Activated CD8-positive, alpha-beta T cell treated with anti-CD3 and anti-CD28 coated beads for 36 hours (primary cell): ENCODE measurements at regions of chr19 and their contacts with region 1.

Region 1: DNA sequence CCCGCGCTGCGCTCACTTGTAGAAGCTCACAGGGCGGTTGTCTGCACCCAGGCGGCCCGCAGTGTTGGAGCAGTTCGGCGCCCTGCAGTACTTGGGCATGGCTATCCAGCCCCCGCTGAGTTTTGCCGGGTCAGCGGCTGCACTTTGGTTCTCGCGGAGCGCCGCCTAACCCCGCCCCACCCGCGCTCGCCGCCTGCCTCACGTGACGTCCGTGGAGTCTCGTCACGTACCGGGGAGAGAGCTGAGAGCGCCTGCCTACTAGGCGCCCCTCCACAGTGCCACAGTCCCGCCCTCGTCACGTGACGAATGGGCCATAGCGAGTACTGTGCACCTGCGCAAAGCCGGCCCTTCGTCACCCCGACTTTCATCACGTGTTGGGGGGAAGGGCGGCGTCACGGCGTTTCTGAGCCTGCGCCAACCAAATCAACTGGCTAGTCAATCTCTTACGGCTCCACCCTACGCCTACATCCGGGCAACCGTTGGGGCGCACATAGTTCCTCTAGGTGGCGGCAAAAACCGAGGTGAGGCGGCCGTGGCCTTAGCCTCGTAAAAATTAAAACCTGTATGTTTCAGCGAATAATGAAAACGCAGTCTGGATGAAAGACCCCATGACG is at the start of gene THAP8:
- DNase-seq: peak; percentile 100
- ATAC-seq: peak; percentile 89
- H3K4me3 Mint-ChIP-seq: peak within 1 kb of the TSS; percentile 89
- H3K27ac Mint-ChIP-seq: peak within 1 kb of the TSS; percentile 98
- H3K4me1 Mint-ChIP-seq: peaks cover 11% of the 10 kb centered on the region
- H3K27me3 Mint-ChIP-seq: no peaks in the 10 kb centered on the region
- CTCF ChIP-seq: peak; percentile 45
- total RNA-seq, gene THAP8: 3.4 to 3.7 TPM

Region 2: GRCh38 chr19:36003284-36003683 is 50.9 kb before region 1 on chr19:
- CTCF ChIA-PET with region 1: no interaction called
- POLR2A ChIA-PET with region 1: no interaction called
- intact Hi-C with region 1: no loop called
- DNase-seq: no peak
- ATAC-seq: no peak
- H3K4me3 Mint-ChIP-seq: no peak overlapping the region
- H3K27ac Mint-ChIP-seq: no peak overlapping the region
- H3K4me1 Mint-ChIP-seq: peaks cover 15% of the 10 kb centered on the region
- H3K27me3 Mint-ChIP-seq: no peaks in the 10 kb centered on the region
- CTCF ChIP-seq: no peak

Region 3: DNA sequence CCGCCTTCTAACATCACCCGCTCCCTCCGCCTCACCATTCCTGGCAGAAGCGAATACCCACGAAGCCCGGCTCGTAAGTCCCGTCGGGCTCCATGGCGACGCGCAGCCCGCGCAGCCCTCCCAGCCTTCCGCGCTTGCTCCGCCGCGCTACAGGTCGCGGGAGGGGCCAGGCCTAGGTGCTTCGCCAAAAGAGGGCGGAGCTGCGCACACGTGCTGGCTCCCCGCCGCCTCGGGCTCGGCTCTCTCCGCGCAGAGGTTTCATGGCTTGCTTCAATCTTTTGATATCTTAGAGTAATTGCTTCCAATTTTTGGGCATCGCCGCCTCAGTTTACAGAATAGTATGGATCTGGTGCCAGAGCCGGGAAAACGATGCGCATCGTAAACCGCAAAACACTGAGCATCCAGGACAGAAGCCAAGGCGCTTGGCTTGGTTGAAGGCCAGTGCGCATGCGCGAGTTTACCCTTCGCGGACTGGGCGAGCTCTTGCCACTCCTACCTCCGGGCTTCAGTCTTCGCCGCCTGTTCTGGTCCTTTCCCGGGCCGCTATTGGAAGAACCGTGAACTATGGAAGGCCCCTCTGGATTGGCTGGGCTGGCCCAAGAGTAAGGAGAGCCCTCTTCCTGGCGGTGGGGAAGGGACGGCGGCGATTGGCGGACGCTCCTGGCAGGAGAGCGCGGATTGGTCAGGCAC is 60.7 kb after region 1 on chr19 and contains the start of gene POLR2I:
- CTCF ChIA-PET with region 1: interaction called, 3 read pairs
- POLR2A ChIA-PET with region 1: interaction called, 5 read pairs
- intact Hi-C with region 1: loop called (anchors 5 kb)
- DNase-seq: peak; percentile 99
- ATAC-seq: peak; percentile 93
- H3K4me3 Mint-ChIP-seq: peak within 1 kb of the TSS; percentile 92
- H3K27ac Mint-ChIP-seq: peak within 1 kb of the TSS; percentile 89
- H3K4me1 Mint-ChIP-seq: peaks cover 26% of the 10 kb centered on the region
- H3K27me3 Mint-ChIP-seq: no peaks in the 10 kb centered on the region
- CTCF ChIP-seq: no peak
- total RNA-seq, gene POLR2I: 68.4 to 76.5 TPM